AG04450 (cell line): ENCODE measurements at regions of chr2 and their contacts with region 1.

Region 1: DNA sequence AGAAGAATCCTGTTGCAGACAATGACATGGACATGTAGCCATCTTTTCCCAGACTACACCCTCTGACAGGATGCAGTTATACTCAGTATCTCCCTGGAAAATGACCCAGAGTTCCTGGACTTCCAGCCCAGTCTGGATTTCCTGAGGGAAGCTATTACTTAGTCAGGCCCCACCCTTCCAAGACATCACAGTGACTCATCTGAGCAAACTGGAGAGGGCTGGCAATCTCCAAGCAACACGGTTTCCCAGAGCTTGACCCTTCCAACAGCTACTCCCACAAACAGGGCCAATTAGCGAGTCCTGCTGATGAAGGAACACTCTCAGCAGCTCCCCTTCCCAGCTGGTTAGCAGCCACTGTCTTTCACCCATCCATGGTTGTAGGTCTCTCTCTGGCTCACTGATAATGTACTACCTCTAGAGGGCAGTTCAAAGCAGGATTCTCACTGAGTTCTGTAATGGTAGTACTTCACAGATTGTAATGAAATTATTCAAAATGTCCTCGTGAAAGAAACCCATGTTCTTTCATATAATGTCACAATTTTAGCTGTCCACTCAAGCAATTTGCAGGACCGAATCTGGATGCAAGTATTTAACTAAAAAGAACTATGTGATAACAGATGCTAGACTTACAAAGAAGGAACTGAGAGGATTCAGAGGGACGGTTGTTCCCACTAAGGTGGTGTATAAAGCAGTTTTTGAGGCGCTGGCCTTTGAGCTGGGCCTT is 110.2 kb downstream of the MDH1 start:
- DNase-seq: peak; percentile 24
- H3K4me3 ChIP-seq: no peak overlapping the region
- H3K27ac ChIP-seq: no peak overlapping the region
- H3K27me3 ChIP-seq: no peaks in the 10 kb centered on the region
- CTCF ChIP-seq: peak; percentile 75

Region 2: GRCh38 chr2:63712748-63713147 is 13.8 kb after region 1 on chr2:
- CTCF ChIA-PET with region 1: interaction called, 18 read pairs
- POLR2A ChIA-PET with region 1: no interaction called
- DNase-seq: no peak
- H3K4me3 ChIP-seq: no peak overlapping the region
- H3K27ac ChIP-seq: no peak overlapping the region
- H3K27me3 ChIP-seq: no peaks in the 10 kb centered on the region
- CTCF ChIP-seq: no peak

Region 3: GRCh38 chr2:63819765-63820717 is 121.1 kb after region 1 on chr2:
- CTCF ChIA-PET with region 1: interaction called, 10 read pairs
- POLR2A ChIA-PET with region 1: no interaction called
- DNase-seq: no peak
- H3K4me3 ChIP-seq: no peak overlapping the region
- H3K27ac ChIP-seq: no peak overlapping the region
- H3K27me3 ChIP-seq: no peaks in the 10 kb centered on the region
- CTCF ChIP-seq: no peak

Region 4: GRCh38 chr2:63861220-63861822 is 162.3 kb after region 1 on chr2:
- CTCF ChIA-PET with region 1: interaction called, 103 read pairs
- POLR2A ChIA-PET with region 1: interaction called, 8 read pairs
- DNase-seq: no peak
- H3K4me3 ChIP-seq: no peak overlapping the region
- H3K27ac ChIP-seq: no peak overlapping the region
- H3K27me3 ChIP-seq: no peaks in the 10 kb centered on the region
- CTCF ChIP-seq: peak; percentile 56

Region 5: DNA sequence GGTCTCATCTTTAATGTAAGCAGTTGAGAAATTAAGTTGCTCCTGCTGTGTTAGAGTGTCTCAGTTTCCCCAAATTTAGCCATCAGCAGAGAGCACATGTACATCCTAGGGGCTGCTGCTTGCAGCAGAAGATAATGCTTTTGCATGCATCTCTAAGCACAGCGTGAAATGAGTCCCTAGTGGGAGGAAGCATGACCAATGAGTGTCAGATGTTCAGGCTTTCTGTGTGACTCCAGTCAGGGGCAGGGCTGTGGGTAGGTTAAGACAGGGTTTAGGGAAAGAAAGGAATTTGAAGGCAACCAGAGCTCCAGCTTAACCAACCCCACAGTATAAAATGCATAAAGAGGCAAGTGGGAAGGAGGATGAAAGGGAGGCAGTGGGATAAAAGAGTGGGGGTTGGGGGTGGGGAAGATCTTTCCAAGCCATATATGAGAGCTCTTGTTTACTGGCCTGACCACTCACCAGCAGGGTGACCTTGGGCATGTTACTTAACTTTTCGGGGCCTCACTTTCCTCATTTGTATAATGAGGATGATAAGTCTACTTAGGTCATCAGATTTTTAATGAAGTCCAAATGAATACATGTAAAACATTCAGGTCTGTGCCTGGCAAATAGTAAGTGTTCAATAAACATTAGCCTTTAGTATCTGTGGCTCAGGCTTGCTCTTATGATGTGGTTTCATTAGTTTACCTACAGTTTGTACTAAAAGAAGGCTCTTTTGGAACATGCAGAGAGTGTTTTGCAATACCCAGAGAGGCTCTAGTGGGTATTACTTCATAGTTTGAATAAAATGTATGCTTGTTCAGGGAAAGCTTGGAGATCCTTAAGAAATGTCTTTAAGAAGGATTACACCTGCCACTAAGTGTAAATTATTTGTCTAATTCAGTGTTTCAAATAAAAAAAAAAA is 488.0 kb after region 1 on chr2:
- CTCF ChIA-PET with region 1: interaction called, 12 read pairs
- POLR2A ChIA-PET with region 1: no interaction called
- DNase-seq: no peak
- H3K4me3 ChIP-seq: no peak overlapping the region
- H3K27ac ChIP-seq: no peak overlapping the region
- H3K27me3 ChIP-seq: peaks cover 23% of the 10 kb centered on the region
- CTCF ChIP-seq: no peak